Calu3 (cell line): ENCODE measurements at regions of chr18 and their contacts with region 1.

Region 1: GRCh38 chr18:40962784-40963183 is 992.2 kb upstream of the PIK3C3 start:
- DNase-seq: no peak
- H3K4me3 Mint-ChIP-seq: no peak overlapping the region
- H3K27ac Mint-ChIP-seq: no peak overlapping the region
- H3K4me1 Mint-ChIP-seq: no peaks in the 10 kb centered on the region
- H3K27me3 Mint-ChIP-seq: no peaks in the 10 kb centered on the region
- CTCF ChIP-seq: no peak

Region 2: GRCh38 chr18:40464032-40464431 is 498.8 kb before region 1 on chr18:
- CTCF ChIA-PET with region 1: no interaction called
- intact Hi-C with region 1: no loop called
- DNase-seq: no peak
- H3K4me3 Mint-ChIP-seq: no peak overlapping the region
- H3K27ac Mint-ChIP-seq: no peak overlapping the region
- H3K4me1 Mint-ChIP-seq: no peaks in the 10 kb centered on the region
- H3K27me3 Mint-ChIP-seq: no peaks in the 10 kb centered on the region
- CTCF ChIP-seq: no peak

Region 3: DNA sequence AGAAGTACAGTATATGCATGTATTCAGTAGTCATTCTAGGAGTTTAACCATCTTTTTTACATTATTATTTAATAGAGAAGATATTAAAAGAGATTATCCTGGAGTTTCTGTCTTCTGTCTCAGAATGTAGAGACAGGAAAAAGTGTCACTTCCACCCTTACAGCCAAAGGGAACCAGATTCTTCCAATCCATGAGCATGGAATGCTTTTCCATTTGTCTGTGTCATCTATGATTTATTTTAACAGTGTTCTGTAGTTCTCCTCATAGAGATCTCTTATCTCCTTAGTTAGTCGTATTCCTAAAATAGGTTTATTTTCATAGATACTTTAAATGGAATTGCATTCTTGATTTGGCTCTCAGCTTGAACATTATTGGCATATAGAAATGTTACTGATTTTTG is 32.7 kb after region 1 on chr18:
- CTCF ChIA-PET with region 1: no interaction called
- intact Hi-C with region 1: loop called (anchors 2 kb)
- DNase-seq: no peak
- H3K4me3 Mint-ChIP-seq: no peak overlapping the region
- H3K27ac Mint-ChIP-seq: no peak overlapping the region
- H3K4me1 Mint-ChIP-seq: no peaks in the 10 kb centered on the region
- H3K27me3 Mint-ChIP-seq: no peaks in the 10 kb centered on the region
- CTCF ChIP-seq: no peak

Region 4: DNA sequence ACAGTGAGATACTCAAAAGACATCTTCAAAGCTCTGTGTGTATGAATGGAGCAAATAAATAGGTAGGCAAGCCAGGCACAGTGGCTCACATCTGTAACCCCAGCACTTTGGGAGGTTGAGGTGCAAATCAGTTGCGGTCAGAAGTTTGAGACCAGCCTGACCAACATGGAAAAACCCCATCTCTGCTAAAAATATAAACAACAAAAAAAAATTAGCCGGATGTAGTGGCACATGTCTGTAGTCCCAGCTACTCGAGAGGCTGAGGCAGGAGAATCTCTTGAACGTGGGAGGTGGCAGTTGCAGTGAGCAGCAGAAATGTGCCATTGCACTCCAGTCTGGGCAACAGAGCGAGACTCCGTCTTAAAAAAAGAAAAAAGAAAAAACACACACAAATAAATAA is 47.1 kb after region 1 on chr18:
- CTCF ChIA-PET with region 1: no interaction called
- intact Hi-C with region 1: no loop called
- DNase-seq: no peak
- H3K4me3 Mint-ChIP-seq: no peak overlapping the region
- H3K27ac Mint-ChIP-seq: no peak overlapping the region
- H3K4me1 Mint-ChIP-seq: no peaks in the 10 kb centered on the region
- H3K27me3 Mint-ChIP-seq: no peaks in the 10 kb centered on the region
- CTCF ChIP-seq: no peak